GM12878 (cell line): ENCODE measurements at regions of chr6 and their contacts with region 1.

Region 1: DNA sequence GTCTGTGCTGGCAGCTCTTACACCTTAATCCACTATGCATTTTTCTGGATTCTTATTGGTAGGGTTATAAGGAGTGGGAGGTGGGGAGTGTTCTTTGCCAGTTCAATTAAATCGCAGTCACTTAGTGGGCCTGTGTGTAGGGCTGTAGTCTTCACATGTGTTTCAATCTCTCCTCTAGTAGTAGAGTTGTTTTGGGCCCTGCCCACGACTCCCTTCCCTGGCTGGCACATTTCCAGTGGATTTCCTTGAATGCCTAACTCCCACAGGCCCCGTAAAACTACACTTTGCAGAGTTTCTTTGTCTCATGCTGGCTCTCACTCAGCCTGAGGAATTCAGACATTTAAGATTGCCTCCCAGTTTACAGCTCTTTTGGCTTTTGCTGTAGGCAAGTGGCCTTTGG is 414.0 kb upstream of the OPRM1 start:
- DNase-seq: no peak
- ATAC-seq: no peak
- H3K4me3 ChIP-seq: no peak overlapping the region
- H3K27ac ChIP-seq: no peak overlapping the region
- H3K4me1 ChIP-seq: no peaks in the 10 kb centered on the region
- H3K27me3 ChIP-seq: no peaks in the 10 kb centered on the region
- CTCF ChIP-seq: no peak
- EP300 ChIP-seq: no peak
- POLR2A ChIP-seq: no peak
- RAD21 ChIP-seq: no peak

Region 2: GRCh38 chr6:153591159-153591558 is 33.9 kb before region 1 on chr6:
- CTCF ChIA-PET with region 1: no interaction called
- POLR2A ChIA-PET with region 1: no interaction called
- RAD21 ChIA-PET with region 1: no interaction called
- SMC1A ChIA-PET with region 1: no interaction called
- in situ Hi-C with region 1: no loop called
- intact Hi-C with region 1: loop called (anchors 2 kb)
- DNase-seq: peak; percentile 8
- ATAC-seq: peak; percentile 32; the same call in 2 of the 3 replicates
- H3K4me3 ChIP-seq: no peak overlapping the region
- H3K27ac ChIP-seq: peak overlapping the region; percentile 10; the same call in 1 of the 2 replicates
- H3K4me1 ChIP-seq: 0 out of 2 replicates have a peak, but pooled peaks cover 2% of the 10 kb centered on the region
- H3K27me3 ChIP-seq: no peaks in the 10 kb centered on the region
- CTCF ChIP-seq: no peak
- EP300 ChIP-seq: no peak
- POLR2A ChIP-seq: no peak
- RAD21 ChIP-seq: no peak

Region 3: DNA sequence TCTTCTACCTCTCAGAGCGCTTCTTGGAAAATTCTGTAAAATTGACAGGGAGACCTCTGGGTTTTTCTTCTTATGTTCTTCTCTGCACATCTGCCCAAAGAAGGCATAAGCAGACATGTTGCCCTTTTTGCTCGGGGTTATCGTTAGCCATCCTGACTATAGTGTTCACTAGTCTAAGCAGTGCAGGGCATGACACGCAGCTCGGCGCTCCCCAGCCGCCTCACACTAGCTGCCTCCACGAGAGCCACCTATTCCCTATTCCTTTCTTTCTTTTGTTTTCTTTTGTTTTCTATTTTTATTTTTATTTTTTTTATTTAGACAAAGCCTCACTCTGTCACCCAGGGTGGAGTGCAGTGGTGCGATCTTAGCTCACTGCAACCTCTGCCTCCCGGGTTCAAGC is 313.8 kb after region 1 on chr6:
- CTCF ChIA-PET with region 1: no interaction called
- POLR2A ChIA-PET with region 1: no interaction called
- RAD21 ChIA-PET with region 1: no interaction called
- SMC1A ChIA-PET with region 1: no interaction called
- in situ Hi-C with region 1: no loop called
- intact Hi-C with region 1: no loop called
- DNase-seq: no peak
- ATAC-seq: no peak
- H3K4me3 ChIP-seq: no peak overlapping the region
- H3K27ac ChIP-seq: no peak overlapping the region
- H3K4me1 ChIP-seq: no peaks in the 10 kb centered on the region
- H3K27me3 ChIP-seq: no peaks in the 10 kb centered on the region
- CTCF ChIP-seq: no peak
- EP300 ChIP-seq: no peak
- POLR2A ChIP-seq: no peak
- RAD21 ChIP-seq: no peak